ENCODE measurements at regions of chr11 and their contacts with region 1.

Region 1: DNA sequence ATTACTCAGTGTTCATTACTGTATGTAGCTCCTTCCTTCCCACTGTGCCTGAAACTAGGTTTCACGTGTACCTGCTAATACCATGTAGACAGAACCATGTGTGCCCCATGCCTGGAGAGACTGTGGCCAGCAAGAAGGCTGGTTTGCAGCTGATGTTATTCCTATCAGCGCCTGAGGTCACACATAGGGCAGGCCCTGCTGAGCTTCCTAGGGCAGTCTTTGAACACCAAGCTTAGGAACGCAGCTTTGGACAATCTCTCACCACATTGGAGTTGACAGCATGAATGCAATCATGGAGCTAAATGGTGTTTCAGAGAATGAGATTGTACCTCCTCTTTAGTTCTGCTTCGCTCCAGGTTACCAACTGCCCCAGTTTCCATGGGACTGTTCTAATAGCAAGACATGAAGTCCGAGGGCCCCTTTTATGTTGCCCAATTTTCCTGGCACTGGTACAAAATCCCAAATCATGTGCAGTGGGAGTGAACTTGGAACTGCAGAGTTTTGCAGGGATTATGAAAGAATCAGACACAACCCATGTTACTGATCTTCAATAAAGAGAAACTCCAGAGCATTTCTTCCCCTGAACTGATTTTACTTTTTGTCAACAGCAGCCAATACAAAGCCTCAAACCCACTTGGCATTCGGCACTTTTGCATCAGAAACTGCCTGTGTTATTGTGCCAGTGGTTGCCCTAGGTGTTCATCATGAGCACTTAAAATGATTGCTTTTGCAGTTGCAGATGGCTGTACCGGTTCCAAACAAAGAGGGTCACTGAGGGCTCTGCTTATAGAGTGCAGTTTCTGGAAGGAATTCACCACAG is 154.2 kb upstream of the TTC12 start:
- DNase-seq: no peak
- H3K4me3 ChIP-seq: no peak overlapping the region
- H3K27ac ChIP-seq: peak overlapping the region in 1 of 2 experiments; percentile 89; a peak in 2 of 4 replicates
- H3K4me1 ChIP-seq: peaks cover 0 to 47% of the 10 kb centered on the region in 2 experiments; a peak in 2 of 4 replicates
- H3K27me3 ChIP-seq: no peaks in the 10 kb centered on the region
- CTCF ChIP-seq: no peak
- EP300 ChIP-seq: peak in 1 of 2 experiments; percentile 67; a peak in 1 of 4 replicates
- RAD21 ChIP-seq: no peak

Region 2: DNA sequence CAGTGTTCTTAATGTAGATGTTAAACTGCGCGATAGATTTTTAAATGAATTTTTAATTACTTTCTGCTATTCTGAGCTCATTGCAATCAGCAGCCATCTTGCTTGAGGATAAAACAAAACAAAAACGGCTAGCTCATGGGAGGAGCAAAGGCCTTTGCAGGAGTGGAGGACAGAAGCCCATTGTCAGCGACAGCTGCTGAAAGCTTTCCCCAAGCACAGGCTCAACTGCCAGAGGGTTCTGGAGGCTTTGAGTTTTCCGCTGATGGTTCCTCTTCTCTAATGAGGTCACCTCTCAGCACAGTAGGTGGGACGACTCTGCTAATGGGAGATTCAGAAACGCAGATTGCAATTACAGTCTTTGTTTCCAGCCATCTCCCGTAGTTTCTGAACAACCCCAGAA is 12.9 kb before region 1 on chr11:
- CTCF ChIA-PET with region 1: interaction called, 12 read pairs
- POLR2A ChIA-PET with region 1: interaction called, 3 read pairs
- DNase-seq: no peak
- H3K4me3 ChIP-seq: no peak overlapping the region
- H3K27ac ChIP-seq: peak overlapping the region in 1 of 2 experiments; percentile 78; a peak in 2 of 4 replicates
- H3K4me1 ChIP-seq: peaks cover 0 to 17% of the 10 kb centered on the region in 2 experiments; a peak in 2 of 4 replicates
- H3K27me3 ChIP-seq: no peaks in the 10 kb centered on the region
- CTCF ChIP-seq: no peak
- EP300 ChIP-seq: no peak
- RAD21 ChIP-seq: no peak

Region 3: DNA sequence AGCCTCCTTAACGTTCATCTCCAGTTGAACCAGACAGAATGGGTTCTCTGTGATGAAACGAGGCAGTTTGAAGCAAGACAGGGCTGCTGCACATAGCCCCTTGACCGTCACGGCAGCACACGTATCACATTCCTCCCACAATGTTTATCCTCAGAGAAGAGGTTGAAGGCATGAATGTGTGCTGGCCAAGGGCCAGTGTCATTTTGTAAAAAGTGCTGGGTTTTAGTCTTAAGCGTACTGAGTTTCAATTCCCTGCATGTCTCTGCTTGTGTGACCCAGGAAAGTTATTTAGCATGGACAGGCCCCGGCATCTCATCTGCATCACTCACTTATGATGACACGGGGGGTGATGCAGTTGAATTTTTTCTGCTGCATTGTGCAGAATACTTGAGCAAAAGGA is 185.8 kb after region 1 on chr11:
- CTCF ChIA-PET with region 1: no interaction called
- POLR2A ChIA-PET with region 1: no interaction called
- DNase-seq: no peak
- H3K4me3 ChIP-seq: no peak overlapping the region
- H3K27ac ChIP-seq: no peak overlapping the region
- H3K4me1 ChIP-seq: peaks cover 0 to 12% of the 10 kb centered on the region in 2 experiments; a peak in 2 of 4 replicates
- H3K27me3 ChIP-seq: no peaks in the 10 kb centered on the region
- CTCF ChIP-seq: no peak
- EP300 ChIP-seq: no peak
- RAD21 ChIP-seq: no peak

Region 4: DNA sequence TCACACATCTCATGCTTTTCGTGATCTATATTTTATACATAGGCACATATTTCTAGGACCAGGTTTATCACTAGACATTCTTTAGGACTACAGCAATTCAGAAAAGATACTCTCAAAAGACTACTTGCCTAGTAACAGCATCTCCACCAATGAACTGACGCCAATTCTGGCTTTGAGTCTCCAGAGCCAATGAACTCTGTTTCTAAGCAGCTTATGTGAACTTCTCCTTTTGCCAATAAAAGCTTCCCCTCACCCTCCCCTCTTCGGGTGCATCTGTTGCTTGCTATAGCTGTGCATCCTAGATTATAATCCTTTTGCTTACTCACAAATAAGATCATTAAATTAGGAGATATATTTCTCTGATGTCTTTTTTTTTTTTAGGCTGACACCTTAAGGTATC is 216.0 kb after region 1 on chr11:
- CTCF ChIA-PET with region 1: no interaction called
- POLR2A ChIA-PET with region 1: no interaction called
- DNase-seq: no peak
- H3K4me3 ChIP-seq: no peak overlapping the region
- H3K27ac ChIP-seq: no peak overlapping the region
- H3K4me1 ChIP-seq: peaks cover 0 to 8% of the 10 kb centered on the region in 2 experiments; a peak in 2 of 4 replicates
- H3K27me3 ChIP-seq: no peaks in the 10 kb centered on the region
- CTCF ChIP-seq: no peak
- EP300 ChIP-seq: no peak
- RAD21 ChIP-seq: no peak